ENCODE measurements at regions of chr3 and their contacts with region 1.

Region 1: DNA sequence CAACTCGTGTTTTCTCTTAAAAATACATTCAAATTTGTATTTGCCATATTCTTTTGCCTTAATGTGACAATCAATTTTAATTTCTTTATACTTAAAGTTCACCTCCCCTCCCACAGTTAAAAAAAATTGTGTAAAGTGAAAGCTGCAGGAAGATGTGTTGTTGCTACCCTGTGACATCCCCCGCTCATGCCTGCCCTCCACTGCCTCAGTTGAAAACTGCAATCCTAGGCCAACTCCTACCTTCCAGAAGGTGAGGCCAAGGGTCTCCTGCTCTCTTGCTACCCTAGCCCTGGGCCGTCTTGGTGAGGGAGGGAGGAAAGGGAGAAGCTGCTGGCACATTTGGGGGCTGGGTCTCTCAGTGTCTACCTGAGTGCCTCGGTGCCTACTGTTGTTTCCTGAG is 57.0 kb upstream of the CMTM7 start:
- DNase-seq: peak in 1 of 2 experiments; percentile 70
- H3K4me3 ChIP-seq: no peak overlapping the region
- H3K27ac ChIP-seq: no peak overlapping the region
- H3K4me1 ChIP-seq: peaks cover 0 to 3% (median 2%) of the 10 kb centered on the region in 4 experiments; a peak in 5 of 7 replicates
- H3K27me3 ChIP-seq: no peaks in the 10 kb centered on the region
- CTCF ChIP-seq: peak; percentile 76 to 78 (median 76)
- EP300 ChIP-seq: no peak
- POLR2A ChIP-seq: no peak
- RAD21 ChIP-seq: peak; percentile 69 to 75

Region 2: GRCh38 chr3:32018757-32019564 is 315.7 kb before region 1 on chr3:
- CTCF ChIA-PET with region 1: no interaction called
- POLR2A ChIA-PET with region 1: no interaction called
- DNase-seq: no peak
- H3K4me3 ChIP-seq: no peak overlapping the region
- H3K27ac ChIP-seq: no peak overlapping the region
- H3K4me1 ChIP-seq: no peaks in the 10 kb centered on the region
- H3K27me3 ChIP-seq: no peaks in the 10 kb centered on the region
- CTCF ChIP-seq: peak in 2 of 3 experiments; percentile 49 to 61; a peak in 2 of 4 replicates
- EP300 ChIP-seq: no peak
- POLR2A ChIP-seq: no peak
- RAD21 ChIP-seq: peak; percentile 75 to 80

Region 3: GRCh38 chr3:32302601-32303398 is 31.9 kb before region 1 on chr3:
- CTCF ChIA-PET with region 1: interaction called, 207 read pairs
- POLR2A ChIA-PET with region 1: no interaction called
- DNase-seq: no peak
- H3K4me3 ChIP-seq: no peak overlapping the region
- H3K27ac ChIP-seq: no peak overlapping the region
- H3K4me1 ChIP-seq: peaks cover 0 to 18% (median 5%) of the 10 kb centered on the region in 4 experiments; a peak in 4 of 7 replicates
- H3K27me3 ChIP-seq: no peaks in the 10 kb centered on the region
- CTCF ChIP-seq: no peak
- EP300 ChIP-seq: no peak
- POLR2A ChIP-seq: no peak
- RAD21 ChIP-seq: no peak

Region 4: GRCh38 chr3:32313723-32314473 is 20.8 kb before region 1 on chr3:
- CTCF ChIA-PET with region 1: interaction called, 21 read pairs
- POLR2A ChIA-PET with region 1: no interaction called
- DNase-seq: no peak
- H3K4me3 ChIP-seq: no peak overlapping the region
- H3K27ac ChIP-seq: no peak overlapping the region
- H3K4me1 ChIP-seq: peaks cover 0 to 14% (median 4%) of the 10 kb centered on the region in 4 experiments; a peak in 6 of 7 replicates
- H3K27me3 ChIP-seq: no peaks in the 10 kb centered on the region
- CTCF ChIP-seq: no peak
- EP300 ChIP-seq: no peak
- POLR2A ChIP-seq: no peak
- RAD21 ChIP-seq: no peak

Region 5: DNA sequence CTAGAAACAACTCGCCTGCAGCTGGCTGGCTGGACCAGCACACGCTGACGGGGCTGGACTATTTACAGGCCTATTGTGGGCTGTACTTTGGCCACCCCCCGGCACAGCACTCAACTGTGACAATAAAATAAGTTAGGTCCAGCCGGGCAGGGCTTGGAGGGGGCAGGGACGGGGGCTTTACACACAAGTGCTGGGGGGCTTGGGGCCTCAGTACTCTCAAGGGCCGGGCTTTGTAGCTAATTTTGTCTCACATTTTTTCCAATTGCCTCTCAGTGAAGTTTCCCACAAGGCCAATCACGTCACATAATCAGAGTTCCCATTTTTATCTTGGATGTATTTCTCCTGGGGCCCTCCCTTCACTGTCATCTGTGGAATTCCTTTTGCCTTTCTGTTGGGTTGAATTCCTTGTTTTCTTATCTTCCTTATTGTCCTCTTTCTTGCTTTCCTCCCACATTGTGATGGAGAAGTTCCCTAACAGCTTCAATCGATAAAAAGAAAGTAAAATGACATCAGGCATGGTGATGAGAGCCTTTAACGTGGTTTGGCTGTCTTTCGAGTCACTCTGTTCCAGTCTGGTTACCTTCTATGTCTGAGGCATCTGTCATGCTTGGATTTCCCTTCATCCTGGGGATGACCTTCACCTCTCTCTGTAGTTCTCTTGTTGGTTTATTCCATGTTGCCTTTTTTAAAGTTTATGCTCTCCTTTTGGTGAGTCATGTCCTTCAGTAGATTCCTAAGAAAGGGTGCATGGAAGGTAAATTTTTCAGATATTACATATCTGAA is 12.9 kb after region 1 on chr3:
- CTCF ChIA-PET with region 1: interaction called, 28 read pairs
- POLR2A ChIA-PET with region 1: no interaction called
- DNase-seq: no peak
- H3K4me3 ChIP-seq: peak overlapping the region in 1 of 4 experiments; percentile 10; a peak in 1 of 8 replicates
- H3K27ac ChIP-seq: no peak overlapping the region
- H3K4me1 ChIP-seq: peaks cover 3 to 13% (median 12%) of the 10 kb centered on the region in 4 experiments; a peak in 5 of 7 replicates
- H3K27me3 ChIP-seq: no peaks in the 10 kb centered on the region
- CTCF ChIP-seq: no peak
- EP300 ChIP-seq: no peak
- POLR2A ChIP-seq: no peak
- RAD21 ChIP-seq: no peak

Measured in H1 (cell line).